Sciatic nerve (tissue), 2 donors: ENCODE measurements at regions of chr2 and their contacts with region 1.

Region 1: DNA sequence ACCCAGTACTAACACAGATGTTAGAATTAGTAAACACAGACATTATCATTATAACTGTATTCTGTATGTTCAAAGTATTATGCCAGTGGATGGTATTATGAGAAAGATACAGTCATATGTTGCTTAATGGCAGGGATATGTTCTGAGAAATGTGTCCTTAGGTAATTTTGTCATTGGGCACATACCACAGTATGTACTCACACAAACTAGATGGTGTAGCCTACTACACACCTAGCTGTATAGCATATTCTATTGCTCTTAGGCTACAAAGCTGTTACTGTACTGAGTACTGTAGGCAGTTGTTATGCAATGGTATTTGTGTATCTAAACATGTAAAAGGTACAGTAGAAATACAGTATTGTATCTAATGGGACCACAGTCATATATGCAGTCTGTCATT is 53.8 kb downstream of the GTF3C3 start:
- DNase-seq: no peak
- ATAC-seq: no peak

Region 2: GRCh38 chr2:195343540-195343939 is 1402.2 kb before region 1 on chr2:
- intact Hi-C with region 1: no loop called
- DNase-seq: no peak
- ATAC-seq: no peak

Region 3: GRCh38 chr2:197254776-197255530 is 509.2 kb after region 1 on chr2:
- intact Hi-C with region 1: loop called (anchors 5 kb)
- DNase-seq: no peak
- ATAC-seq: peak; percentile 41